GM12878 (cell line): ENCODE measurements at regions of chr2 and their contacts with region 1.

Region 1: DNA sequence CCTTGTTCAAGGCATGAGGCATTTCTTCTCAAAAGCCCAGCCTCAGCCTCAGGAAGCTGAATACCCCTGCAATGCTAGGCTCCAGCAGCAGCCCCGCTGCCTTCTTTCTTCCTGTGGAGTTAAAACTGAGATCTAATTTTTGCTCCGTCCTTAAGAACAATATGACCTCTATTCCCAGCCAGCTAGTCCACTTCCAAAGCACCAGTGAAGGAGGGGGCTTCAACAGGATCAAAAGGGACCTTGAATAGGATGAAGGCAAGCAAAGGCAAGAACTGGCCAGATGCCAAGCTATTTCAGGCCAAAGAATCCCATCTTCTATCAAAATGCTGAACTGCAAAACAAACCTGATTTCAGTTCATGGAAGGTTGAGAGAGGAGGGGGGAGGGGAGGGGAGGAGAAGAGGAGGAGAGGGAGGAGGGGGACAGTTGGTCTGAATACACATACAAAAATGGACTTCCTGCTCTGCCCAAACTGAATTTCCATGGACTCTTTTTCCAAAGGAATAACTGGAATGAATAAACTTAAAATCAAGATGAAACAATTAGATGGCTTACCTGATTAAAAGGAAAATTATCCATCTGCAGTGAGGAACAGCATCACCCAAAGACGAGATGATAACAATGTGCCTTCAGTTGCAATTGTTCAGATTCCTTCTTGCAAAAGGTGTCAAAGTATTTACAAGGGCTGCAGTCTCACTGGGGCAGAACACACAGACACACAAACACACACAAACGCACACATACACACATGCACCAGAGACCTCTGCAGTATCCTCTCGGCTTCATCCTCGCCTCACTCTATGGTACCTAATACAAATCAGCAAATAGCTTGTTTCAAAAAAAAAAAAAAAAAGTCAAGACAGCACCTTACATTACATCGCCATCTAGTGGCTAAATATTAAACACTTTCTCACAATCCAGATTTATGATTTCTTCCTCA is at the start of gene SCN1A:
- DNase-seq: no peak
- ATAC-seq: peak; percentile 48
- H3K4me3 ChIP-seq: no peak within 1 kb of the TSS
- H3K27ac ChIP-seq: no peak within 1 kb of the TSS
- H3K4me1 ChIP-seq: no peaks in the 10 kb centered on the region
- H3K27me3 ChIP-seq: no peaks in the 10 kb centered on the region
- CTCF ChIP-seq: peak; percentile 38 to 64 (median 56); a peak in 5 of 6 replicates
- EP300 ChIP-seq: no peak
- POLR2A ChIP-seq: no peak
- RAD21 ChIP-seq: peak; percentile 64
- polyA plus RNA-seq, gene SCN1A: not detected

Region 2: GRCh38 chr2:165953655-165954606 is 173.6 kb before region 1 on chr2 and contains the start of gene TTC21B:
- CTCF ChIA-PET with region 1: interaction called, 15 read pairs
- POLR2A ChIA-PET with region 1: no interaction called
- RAD21 ChIA-PET with region 1: interaction called, 5 read pairs
- SMC1A ChIA-PET with region 1: interaction called, 4 read pairs
- in situ Hi-C with region 1: no loop called
- intact Hi-C with region 1: loop called (anchors 1 kb)
- DNase-seq: peak; percentile 64
- ATAC-seq: peak; percentile 97
- H3K4me3 ChIP-seq: peak within 1 kb of the TSS; percentile 81
- H3K27ac ChIP-seq: peak within 1 kb of the TSS; percentile 78
- H3K4me1 ChIP-seq: no peaks in the 10 kb centered on the region; the same call in 1 of the 2 replicates
- H3K27me3 ChIP-seq: no peaks in the 10 kb centered on the region
- CTCF ChIP-seq: peak; percentile 63 to 82 (median 76)
- EP300 ChIP-seq: 0 out of 4 replicates have a peak, but pooled peaks of 1 of the 2 experiments have one; percentile 17
- POLR2A ChIP-seq: peak; percentile 84
- RAD21 ChIP-seq: peak; percentile 47
- polyA plus RNA-seq, gene TTC21B: 2.7 to 3.5 TPM

Region 3: DNA sequence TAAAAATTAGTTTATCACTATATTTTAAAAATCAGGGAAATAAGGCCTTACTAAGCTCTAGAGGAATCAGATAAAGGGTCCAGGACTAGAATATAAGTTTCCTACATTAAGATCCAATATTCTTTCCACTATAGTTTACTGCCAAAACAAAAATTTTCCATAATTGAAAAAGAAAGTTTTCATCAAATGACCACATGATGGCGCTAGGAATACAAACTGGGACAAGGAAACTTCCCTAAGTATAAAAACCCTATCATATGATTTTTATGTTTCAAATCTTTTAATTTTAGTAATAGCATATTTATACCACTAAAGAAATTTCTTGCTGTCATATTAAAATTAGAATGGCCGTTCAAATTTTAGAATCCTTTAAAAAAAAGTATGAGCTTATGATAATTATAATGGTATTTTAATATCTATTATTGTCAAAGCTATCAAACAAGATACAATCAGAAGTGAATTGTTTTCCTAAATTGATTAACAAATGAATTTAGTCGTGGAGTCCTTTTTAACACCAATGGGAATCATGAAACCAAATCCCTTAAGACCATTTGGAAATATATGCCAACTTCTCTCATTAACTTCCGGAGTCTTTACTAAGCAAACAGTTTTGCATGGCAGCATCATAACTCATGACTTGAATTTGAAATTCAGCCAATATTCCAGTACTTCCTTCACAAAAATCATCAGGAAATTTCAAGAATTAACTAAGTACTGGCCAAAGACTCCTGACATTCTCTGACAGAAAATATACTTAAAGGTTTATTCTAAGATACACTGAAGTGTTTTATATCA is 69.9 kb before region 1 on chr2:
- CTCF ChIA-PET with region 1: interaction called, 61 read pairs
- POLR2A ChIA-PET with region 1: no interaction called
- RAD21 ChIA-PET with region 1: interaction called, 26 read pairs
- SMC1A ChIA-PET with region 1: interaction called, 18 read pairs
- in situ Hi-C with region 1: no loop called
- intact Hi-C with region 1: loop called (anchors 2 kb)
- DNase-seq: no peak
- ATAC-seq: no peak
- H3K4me3 ChIP-seq: no peak overlapping the region
- H3K27ac ChIP-seq: no peak overlapping the region
- H3K4me1 ChIP-seq: no peaks in the 10 kb centered on the region
- H3K27me3 ChIP-seq: no peaks in the 10 kb centered on the region
- CTCF ChIP-seq: peak in 2 of 3 experiments; percentile 27 to 36; a peak in 3 of 6 replicates
- EP300 ChIP-seq: no peak
- POLR2A ChIP-seq: no peak
- RAD21 ChIP-seq: peak; percentile 47

Region 4: DNA sequence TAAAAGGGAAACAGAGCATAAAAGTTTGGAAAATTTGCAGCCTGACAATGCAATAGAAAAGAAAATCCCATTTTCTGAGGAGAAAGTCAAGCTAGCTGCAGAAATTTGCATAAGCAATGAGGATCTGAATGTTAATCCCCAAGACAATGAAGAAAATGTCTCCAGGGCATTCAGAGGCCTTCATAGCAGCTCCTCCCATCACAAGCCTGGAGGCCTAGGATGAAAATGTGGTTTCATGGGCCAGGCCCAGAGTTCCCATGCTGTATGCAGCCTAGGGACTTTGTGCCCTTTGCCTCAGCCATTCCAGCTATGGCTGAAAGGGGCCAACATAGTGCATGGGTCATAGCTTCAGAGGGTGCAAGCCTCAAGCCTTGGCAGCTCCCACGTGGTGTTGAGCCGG is 10.7 kb after region 1 on chr2:
- CTCF ChIA-PET with region 1: interaction called, 11 read pairs
- POLR2A ChIA-PET with region 1: no interaction called
- RAD21 ChIA-PET with region 1: no interaction called
- SMC1A ChIA-PET with region 1: interaction called, 3 read pairs
- in situ Hi-C with region 1: no loop called
- intact Hi-C with region 1: no loop called
- DNase-seq: no peak
- ATAC-seq: no peak
- H3K4me3 ChIP-seq: no peak overlapping the region
- H3K27ac ChIP-seq: no peak overlapping the region
- H3K4me1 ChIP-seq: no peaks in the 10 kb centered on the region
- H3K27me3 ChIP-seq: no peaks in the 10 kb centered on the region
- CTCF ChIP-seq: no peak
- EP300 ChIP-seq: no peak
- POLR2A ChIP-seq: no peak
- RAD21 ChIP-seq: no peak